Calu3 (cell line): ENCODE measurements at regions of chr6 and their contacts with region 1.

Region 1: DNA sequence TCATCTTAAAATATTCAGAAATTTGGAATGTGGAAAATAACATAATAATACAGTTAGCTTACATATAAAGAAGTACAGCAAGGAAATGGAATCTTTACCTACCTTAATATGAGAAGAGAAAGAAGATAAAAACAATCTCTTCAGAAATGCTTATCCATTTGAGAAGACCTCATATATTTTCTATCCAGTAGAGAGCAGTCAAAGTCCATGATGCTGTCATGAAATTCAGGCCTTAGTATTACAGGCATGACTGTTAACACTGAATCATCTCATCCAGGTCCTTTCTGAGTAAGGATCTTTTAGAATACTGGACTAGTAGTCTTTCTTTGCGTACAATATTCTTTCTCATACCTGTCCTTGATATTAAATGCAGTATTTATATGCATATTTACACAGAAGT is 713.4 kb downstream of the CD109 start:
- DNase-seq: no peak
- H3K4me3 Mint-ChIP-seq: no peak overlapping the region
- H3K27ac Mint-ChIP-seq: no peak overlapping the region
- H3K4me1 Mint-ChIP-seq: peaks cover 9% of the 10 kb centered on the region
- H3K27me3 Mint-ChIP-seq: no peaks in the 10 kb centered on the region
- CTCF ChIP-seq: peak; percentile 28

Region 2: DNA sequence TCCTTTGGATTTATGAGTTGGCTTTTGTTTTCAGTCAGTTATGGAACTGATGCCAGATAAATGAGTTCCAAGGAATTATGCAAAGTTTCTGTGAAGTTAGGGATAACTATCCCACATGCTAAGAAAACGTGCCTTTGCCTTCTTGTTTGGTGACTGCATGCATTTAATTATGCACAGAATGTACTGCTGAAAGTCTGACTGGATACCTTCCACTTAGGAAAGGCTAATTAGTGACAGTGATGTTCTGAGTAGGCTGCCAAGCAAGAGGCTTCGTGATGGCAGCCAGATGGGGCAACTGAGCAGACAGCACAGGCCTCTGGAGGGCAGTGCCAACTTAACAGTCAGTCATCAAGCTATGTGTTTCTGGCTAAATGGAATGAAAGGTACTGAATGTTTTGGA is 423.6 kb before region 1 on chr6:
- CTCF ChIA-PET with region 1: no interaction called
- intact Hi-C with region 1: loop called (anchors 10 kb)
- DNase-seq: peak; percentile 35
- H3K4me3 Mint-ChIP-seq: no peak overlapping the region
- H3K27ac Mint-ChIP-seq: no peak overlapping the region
- H3K4me1 Mint-ChIP-seq: no peaks in the 10 kb centered on the region
- H3K27me3 Mint-ChIP-seq: no peaks in the 10 kb centered on the region
- CTCF ChIP-seq: peak; percentile 61

Region 3: DNA sequence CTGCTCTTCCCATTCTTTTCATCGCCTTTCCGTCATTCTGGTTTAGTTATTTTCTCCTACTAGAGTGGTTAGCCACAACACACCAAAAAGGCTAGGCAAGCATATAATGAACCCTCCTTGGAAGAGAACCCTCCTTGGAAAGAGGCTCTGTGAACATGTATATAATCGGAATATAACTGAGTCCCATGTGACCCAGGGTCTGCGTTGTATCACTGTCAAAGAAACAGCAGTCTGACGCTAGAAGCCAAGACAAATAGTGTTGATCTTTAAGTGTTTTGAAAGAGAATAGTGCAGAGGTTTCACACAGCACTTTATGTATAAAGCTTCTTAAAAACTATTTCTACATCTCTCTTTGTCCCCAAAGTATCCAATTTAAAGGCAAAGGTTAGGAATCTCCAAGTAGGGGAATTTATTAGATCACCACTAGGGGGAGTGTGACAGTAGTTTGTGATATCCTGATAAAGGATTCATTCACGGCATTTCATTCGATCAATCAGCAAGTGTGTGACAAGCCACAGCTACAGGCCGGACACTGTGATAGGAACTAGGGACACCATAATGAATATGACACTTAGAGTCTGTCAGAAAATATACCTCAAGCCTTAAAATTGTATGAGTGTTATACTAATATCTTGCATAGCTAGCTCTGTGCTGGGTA is 318.2 kb before region 1 on chr6:
- CTCF ChIA-PET with region 1: interaction called, 3 read pairs
- intact Hi-C with region 1: loop called (anchors 5 kb)
- DNase-seq: peak; percentile 25
- H3K4me3 Mint-ChIP-seq: no peak overlapping the region
- H3K27ac Mint-ChIP-seq: no peak overlapping the region
- H3K4me1 Mint-ChIP-seq: peaks cover 9% of the 10 kb centered on the region
- H3K27me3 Mint-ChIP-seq: no peaks in the 10 kb centered on the region
- CTCF ChIP-seq: peak; percentile 52

Region 4: DNA sequence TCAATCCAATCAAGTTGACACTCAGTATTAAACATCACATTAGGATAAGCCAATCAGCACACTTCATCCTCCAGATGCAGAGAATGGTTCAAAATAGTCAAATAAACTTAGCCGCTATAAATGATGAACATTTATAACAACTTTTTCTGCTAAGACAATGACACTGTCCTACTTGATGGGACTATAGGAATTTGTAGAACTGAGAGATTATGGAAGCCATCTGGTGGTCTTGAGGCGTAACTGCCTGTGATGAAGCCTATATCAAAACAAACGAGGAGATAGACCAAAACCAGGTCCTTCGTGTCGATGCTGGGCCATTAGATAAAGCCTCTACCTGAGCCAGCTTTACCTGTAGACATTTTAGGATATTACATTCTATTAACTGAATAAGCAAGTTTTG is 165.3 kb after region 1 on chr6:
- CTCF ChIA-PET with region 1: no interaction called
- intact Hi-C with region 1: loop called (anchors 1 kb)
- DNase-seq: peak; percentile 18
- H3K4me3 Mint-ChIP-seq: no peak overlapping the region
- H3K27ac Mint-ChIP-seq: peak overlapping the region; percentile 54
- H3K4me1 Mint-ChIP-seq: peaks cover 18% of the 10 kb centered on the region
- H3K27me3 Mint-ChIP-seq: no peaks in the 10 kb centered on the region
- CTCF ChIP-seq: peak; percentile 71

Region 5: GRCh38 chr6:74749211-74750142 is 340.0 kb after region 1 on chr6:
- CTCF ChIA-PET with region 1: no interaction called
- intact Hi-C with region 1: loop called (anchors 5 kb)
- DNase-seq: peak; percentile 39
- H3K4me3 Mint-ChIP-seq: peak overlapping the region; percentile 46
- H3K27ac Mint-ChIP-seq: peak overlapping the region; percentile 36
- H3K4me1 Mint-ChIP-seq: peaks cover 21% of the 10 kb centered on the region
- H3K27me3 Mint-ChIP-seq: no peaks in the 10 kb centered on the region
- CTCF ChIP-seq: no peak

Region 6: GRCh38 chr6:74870403-74870802 is 461.0 kb after region 1 on chr6:
- CTCF ChIA-PET with region 1: interaction called, 3 read pairs
- intact Hi-C with region 1: loop called (anchors 10 kb)
- DNase-seq: peak; percentile 51
- H3K4me3 Mint-ChIP-seq: no peak overlapping the region
- H3K27ac Mint-ChIP-seq: peak overlapping the region; percentile 29
- H3K4me1 Mint-ChIP-seq: peaks cover 42% of the 10 kb centered on the region
- H3K27me3 Mint-ChIP-seq: no peaks in the 10 kb centered on the region
- CTCF ChIP-seq: no peak

Region 7: GRCh38 chr6:74991573-74992332 is 582.3 kb after region 1 on chr6:
- CTCF ChIA-PET with region 1: no interaction called
- intact Hi-C with region 1: loop called (anchors 10 kb)
- DNase-seq: no peak
- H3K4me3 Mint-ChIP-seq: no peak overlapping the region
- H3K27ac Mint-ChIP-seq: no peak overlapping the region
- H3K4me1 Mint-ChIP-seq: peaks cover 7% of the 10 kb centered on the region
- H3K27me3 Mint-ChIP-seq: no peaks in the 10 kb centered on the region
- CTCF ChIP-seq: peak; percentile 20